PC-3 (cell line): ENCODE measurements at regions of chr1 and their contacts with region 1.

Region 1: DNA sequence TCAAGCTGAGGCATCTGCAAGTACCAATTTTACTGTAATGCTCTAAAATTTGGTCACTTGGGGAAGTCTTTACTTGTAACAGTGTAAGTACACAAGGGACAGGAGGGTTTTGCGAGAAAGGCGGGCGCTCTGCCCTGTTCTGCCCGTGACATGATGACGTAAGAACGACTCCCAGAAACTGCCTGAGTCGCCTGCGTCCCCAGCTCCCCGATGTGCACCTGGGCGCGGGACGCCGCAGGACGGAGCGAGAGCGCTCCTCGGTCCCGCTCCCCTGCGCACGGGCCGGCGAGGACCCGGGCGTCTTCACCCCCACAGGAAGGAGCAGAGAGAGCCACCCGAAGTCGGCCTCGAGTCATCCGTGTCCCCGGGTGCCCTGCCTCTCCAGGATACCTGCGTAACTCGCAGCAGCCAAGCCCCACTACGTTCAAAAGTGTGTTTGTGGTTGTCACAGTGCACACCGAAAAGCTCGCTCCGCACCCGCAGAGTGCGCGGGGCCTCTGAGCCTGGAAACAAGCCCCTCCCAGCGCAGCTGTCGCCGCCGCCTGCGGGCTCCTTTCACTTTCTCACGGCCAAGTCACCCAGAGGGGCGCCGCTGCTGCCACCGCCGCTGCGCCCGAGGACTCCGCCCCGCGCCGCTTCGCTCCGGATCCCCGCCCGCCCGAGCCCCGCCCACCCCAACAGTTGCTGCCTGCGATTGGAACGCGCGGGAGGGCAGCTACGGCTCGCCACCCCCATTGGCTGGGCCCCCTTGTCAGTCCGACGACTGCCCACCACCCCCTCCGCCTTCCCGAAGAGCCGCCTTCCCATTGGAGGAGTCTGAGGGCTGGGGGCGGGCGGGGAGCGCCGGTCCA is 3.2 kb upstream of the ZBTB18 start:
- DNase-seq: peak; percentile 99
- ATAC-seq: peak; percentile 90
- H3K4me3 ChIP-seq: peak overlapping the region; percentile 98
- H3K27ac ChIP-seq: peak overlapping the region; percentile 62
- H3K4me1 ChIP-seq: peaks cover 24% of the 10 kb centered on the region
- H3K27me3 ChIP-seq: 0 out of 2 replicates have a peak, but pooled peaks cover 6% of the 10 kb centered on the region
- CTCF ChIP-seq: no peak

Region 2: GRCh38 chr1:243623841-243624240 is 424.0 kb before region 1 on chr1:
- CTCF ChIA-PET with region 1: no interaction called
- POLR2A ChIA-PET with region 1: no interaction called
- intact Hi-C with region 1: no loop called
- DNase-seq: peak; percentile 18
- ATAC-seq: no peak
- H3K4me3 ChIP-seq: no peak overlapping the region
- H3K27ac ChIP-seq: no peak overlapping the region
- H3K4me1 ChIP-seq: no peaks in the 10 kb centered on the region
- H3K27me3 ChIP-seq: no peaks in the 10 kb centered on the region
- CTCF ChIP-seq: no peak

Region 3: DNA sequence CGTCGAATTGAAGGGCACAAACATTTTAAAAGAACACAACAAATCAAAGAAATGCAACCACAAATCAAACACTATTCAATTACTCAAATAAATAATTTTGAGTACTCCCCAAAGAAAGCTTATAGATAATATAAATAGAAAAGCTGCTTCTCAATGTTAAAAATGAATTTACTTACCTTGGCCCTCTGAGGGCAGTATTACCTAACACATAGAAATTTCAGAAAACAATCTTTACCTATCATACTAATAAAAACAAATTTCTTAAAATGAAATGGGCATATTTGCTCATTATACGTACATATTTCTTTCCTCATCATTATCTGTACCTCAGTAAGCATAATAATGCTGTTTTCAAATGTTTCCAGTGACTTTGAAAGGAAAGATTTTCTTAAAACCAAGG is 339.6 kb before region 1 on chr1:
- CTCF ChIA-PET with region 1: interaction called, 3 read pairs
- POLR2A ChIA-PET with region 1: no interaction called
- intact Hi-C with region 1: loop called (anchors 2 kb)
- DNase-seq: peak; percentile 50
- ATAC-seq: no peak
- H3K4me3 ChIP-seq: no peak overlapping the region
- H3K27ac ChIP-seq: no peak overlapping the region
- H3K4me1 ChIP-seq: peaks cover 15% of the 10 kb centered on the region
- H3K27me3 ChIP-seq: no peaks in the 10 kb centered on the region
- CTCF ChIP-seq: peak; percentile 86

Region 4: DNA sequence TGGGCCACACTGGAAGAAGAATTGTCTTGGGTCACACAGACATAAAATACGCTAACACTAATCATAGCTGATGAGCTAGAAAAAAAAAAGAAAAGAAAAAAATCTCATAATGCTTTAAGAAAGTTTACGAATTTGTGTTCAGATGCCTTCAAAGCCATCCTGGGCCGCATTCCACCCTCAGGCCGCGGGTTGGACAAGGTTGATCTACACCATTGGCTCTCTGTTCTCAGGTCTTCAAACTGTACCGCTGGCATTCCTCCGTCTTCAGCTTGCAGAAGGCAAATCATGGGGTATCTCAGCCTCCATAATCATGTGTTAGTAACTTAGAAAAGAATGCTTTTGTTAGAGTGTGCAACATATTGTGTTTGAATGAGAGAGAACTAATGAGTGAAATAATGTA is 182.9 kb before region 1 on chr1:
- CTCF ChIA-PET with region 1: no interaction called
- POLR2A ChIA-PET with region 1: interaction called, 18 read pairs
- intact Hi-C with region 1: no loop called
- DNase-seq: no peak
- ATAC-seq: no peak
- H3K4me3 ChIP-seq: no peak overlapping the region
- H3K27ac ChIP-seq: no peak overlapping the region
- H3K4me1 ChIP-seq: no peaks in the 10 kb centered on the region
- H3K27me3 ChIP-seq: no peaks in the 10 kb centered on the region
- CTCF ChIP-seq: no peak

Region 5: GRCh38 chr1:244065960-244066388 is 18.1 kb after region 1 on chr1:
- CTCF ChIA-PET with region 1: no interaction called
- POLR2A ChIA-PET with region 1: no interaction called
- intact Hi-C with region 1: loop called (anchors 2 kb)
- DNase-seq: peak; percentile 36
- ATAC-seq: peak; percentile 24; the same call in 1 of the 2 replicates
- H3K4me3 ChIP-seq: no peak overlapping the region
- H3K27ac ChIP-seq: no peak overlapping the region
- H3K4me1 ChIP-seq: no peaks in the 10 kb centered on the region
- H3K27me3 ChIP-seq: no peaks in the 10 kb centered on the region
- CTCF ChIP-seq: no peak

Region 6: GRCh38 chr1:244192336-244192735 is 144.5 kb after region 1 on chr1:
- CTCF ChIA-PET with region 1: no interaction called
- POLR2A ChIA-PET with region 1: no interaction called
- intact Hi-C with region 1: no loop called
- DNase-seq: no peak
- ATAC-seq: no peak
- H3K4me3 ChIP-seq: no peak overlapping the region
- H3K27ac ChIP-seq: no peak overlapping the region
- H3K4me1 ChIP-seq: 0 out of 2 replicates have a peak, but pooled peaks cover under 1% of the 10 kb centered on the region
- H3K27me3 ChIP-seq: no peaks in the 10 kb centered on the region
- CTCF ChIP-seq: no peak

Region 7: DNA sequence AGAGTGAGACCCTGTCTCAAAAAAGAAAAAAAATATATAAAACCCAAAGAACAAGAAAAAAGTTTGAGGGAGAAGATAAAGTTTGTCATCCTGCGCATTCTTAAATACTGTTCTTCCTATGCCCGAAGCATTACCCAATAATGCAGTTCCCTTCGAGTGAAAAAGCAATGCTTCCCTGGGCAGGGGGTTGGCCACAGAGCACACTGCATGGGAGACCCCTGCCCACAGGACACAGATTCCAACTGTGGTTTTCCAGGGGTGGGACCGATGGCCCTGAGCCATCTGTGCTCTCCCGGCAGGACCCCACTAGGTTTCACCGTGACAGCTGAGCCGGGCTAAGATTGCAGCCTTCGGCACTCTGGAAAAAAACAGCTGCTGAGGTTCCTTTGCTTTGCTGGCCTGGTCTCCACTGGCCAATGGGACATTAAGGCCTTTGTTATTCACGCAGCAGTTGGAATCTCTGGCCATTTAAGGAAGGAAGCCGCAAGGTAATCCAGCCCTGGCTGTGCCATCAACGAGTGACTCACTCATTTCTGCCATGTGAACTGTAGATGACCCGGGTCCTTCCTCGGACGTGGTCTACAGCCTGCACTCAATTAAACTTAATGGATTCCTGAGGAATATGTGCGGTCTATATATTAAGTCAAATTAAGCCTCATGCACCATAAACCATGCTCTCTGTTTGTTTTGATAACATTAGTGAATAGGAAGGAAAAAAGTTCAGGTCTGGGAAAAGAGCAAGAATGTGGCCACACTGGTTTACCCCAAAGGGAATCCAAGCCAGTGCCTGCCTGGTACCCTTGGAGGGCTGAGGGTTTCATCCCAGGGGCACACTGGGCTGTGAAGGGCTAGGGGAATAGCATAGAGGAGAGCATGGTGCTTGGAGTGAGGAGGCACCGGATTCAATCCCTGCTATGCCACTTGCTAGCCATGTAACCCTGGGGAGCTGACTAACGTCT is 166.4 kb after region 1 on chr1:
- CTCF ChIA-PET with region 1: no interaction called
- POLR2A ChIA-PET with region 1: no interaction called
- intact Hi-C with region 1: loop called (anchors 5 kb)
- DNase-seq: peak; percentile 90
- ATAC-seq: peak; percentile 50
- H3K4me3 ChIP-seq: no peak overlapping the region
- H3K27ac ChIP-seq: peak overlapping the region; percentile 45
- H3K4me1 ChIP-seq: peaks cover 25% of the 10 kb centered on the region
- H3K27me3 ChIP-seq: no peaks in the 10 kb centered on the region
- CTCF ChIP-seq: no peak

Region 8: DNA sequence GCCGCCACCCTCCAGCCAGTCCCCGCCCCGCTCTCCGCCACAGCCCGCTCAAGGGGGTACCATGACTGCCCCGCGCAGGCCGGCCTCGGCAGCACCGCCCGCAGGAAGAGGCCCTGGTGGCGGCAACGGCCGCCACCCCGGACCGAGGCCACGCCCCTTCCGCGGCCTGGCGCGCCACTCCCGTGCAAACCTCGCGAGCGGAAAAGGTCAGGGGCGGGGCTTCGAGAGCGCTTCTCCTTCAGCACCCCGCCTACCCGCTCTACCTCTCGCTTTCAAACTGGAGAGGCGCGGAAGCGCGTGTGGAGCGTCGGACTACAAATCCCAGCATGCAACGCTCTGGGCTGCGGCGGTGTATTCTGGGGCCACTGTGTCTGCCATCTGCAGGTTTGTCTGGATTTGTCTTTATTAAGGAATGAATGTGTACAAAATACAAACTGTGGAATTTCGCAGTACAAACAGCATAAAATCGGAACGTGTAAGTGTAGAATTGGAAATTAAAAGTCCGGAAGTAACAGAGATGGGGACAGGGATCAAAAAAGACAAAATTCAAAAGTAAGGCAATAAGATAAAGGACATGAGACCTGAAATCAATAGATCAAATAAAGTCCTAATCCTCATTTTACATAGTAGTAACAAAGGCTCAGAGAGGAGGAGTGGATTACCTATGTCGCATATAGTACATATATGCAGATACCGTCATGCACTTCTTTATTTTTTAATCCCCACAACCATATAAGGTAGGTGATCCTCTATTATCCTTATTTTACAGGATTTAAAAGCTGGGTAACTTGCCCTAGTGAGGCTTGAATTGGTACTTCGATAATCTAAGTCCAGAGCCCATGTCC is 404.3 kb after region 1 on chr1:
- CTCF ChIA-PET with region 1: interaction called, 5 read pairs
- POLR2A ChIA-PET with region 1: no interaction called
- intact Hi-C with region 1: loop called (anchors 5 kb)
- DNase-seq: peak; percentile 100
- ATAC-seq: peak; percentile 95
- H3K4me3 ChIP-seq: peak overlapping the region; percentile 96
- H3K27ac ChIP-seq: peak overlapping the region; percentile 78; the same call in 1 of the 2 replicates
- H3K4me1 ChIP-seq: peaks cover 33% of the 10 kb centered on the region
- H3K27me3 ChIP-seq: no peaks in the 10 kb centered on the region
- CTCF ChIP-seq: peak; percentile 55